Gastrocnemius medialis (tissue), 4 donors: ENCODE measurements at regions of chr1 and their contacts with region 1.

Region 1: GRCh38 chr1:226702957-226703831 is 35.9 kb downstream of the ITPKB start:
- DNase-seq: peak; percentile 57 to 65
- ATAC-seq: peak; percentile 61 to 63
- H3K4me3 ChIP-seq: peak overlapping the region; percentile 79 to 90 (median 84)
- H3K27ac ChIP-seq: peak overlapping the region; percentile 96 to 99 (median 98)
- H3K4me1 ChIP-seq: peaks cover 33 to 51% of the 10 kb centered on the region in 2 donors
- H3K27me3 ChIP-seq: no peaks in the 10 kb centered on the region
- CTCF ChIP-seq: peak in 2 of 5 experiments; percentile 21 to 32
- POLR2A ChIP-seq: peak; percentile 92 to 95

Region 2: DNA sequence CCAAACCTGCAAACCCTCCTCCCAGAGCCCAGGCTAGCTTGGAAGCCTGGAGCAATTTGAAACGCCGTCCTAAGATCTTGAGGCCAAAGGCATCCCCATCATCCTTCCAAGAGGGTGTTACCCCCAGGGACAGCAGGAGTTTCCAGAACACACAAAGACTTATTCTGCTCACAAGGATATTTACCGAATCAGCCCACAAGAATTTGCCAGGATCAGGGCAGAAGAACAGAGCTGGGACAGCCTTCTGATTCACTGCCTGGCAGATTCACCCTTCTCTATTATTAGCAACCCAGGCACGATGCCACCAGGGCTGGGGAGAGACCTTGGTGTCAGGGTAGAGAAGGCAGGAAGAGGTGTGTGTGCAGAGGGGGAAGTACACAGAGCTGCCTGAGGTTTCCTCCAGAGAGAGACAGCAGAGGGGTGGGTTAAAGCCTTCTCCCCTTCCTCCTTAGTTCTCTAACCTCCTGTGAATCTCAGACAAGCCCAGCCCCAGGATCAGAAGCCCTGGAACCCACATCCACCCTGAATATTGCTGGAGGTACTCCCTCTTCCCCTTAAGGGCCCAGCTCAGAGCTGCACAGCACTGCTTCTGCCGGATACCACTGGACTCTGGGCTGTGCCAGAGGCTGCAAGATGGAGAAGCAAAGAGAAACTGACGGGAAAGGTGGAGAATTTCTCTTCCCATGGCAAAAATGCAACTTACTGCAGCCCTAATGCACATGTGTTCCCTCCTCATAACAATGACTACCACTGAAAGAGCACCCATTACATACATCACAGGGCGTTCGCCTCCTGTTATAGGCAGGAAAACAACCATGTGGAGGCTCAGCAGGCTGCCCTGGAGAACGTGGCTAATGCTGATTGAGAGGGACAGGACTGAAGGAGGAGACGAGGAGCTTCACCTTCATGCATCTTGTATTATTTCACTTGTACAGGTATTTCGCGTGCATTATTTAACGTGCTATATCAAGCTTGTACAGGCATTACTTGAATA is 25.9 kb before region 1 on chr1:
- in situ Hi-C with region 1: no loop called
- intact Hi-C with region 1: loop called (anchors 2 kb)
- DNase-seq: peak; percentile 92 to 95
- ATAC-seq: peak; percentile 87 to 91
- H3K4me3 ChIP-seq: peak overlapping the region in 2 of 4 donors; percentile 2 to 10
- H3K27ac ChIP-seq: peak overlapping the region; percentile 89 to 96 (median 94)
- H3K4me1 ChIP-seq: peaks cover 66 to 88% of the 10 kb centered on the region in 2 donors
- H3K27me3 ChIP-seq: no peaks in the 10 kb centered on the region
- CTCF ChIP-seq: no peak
- POLR2A ChIP-seq: peak; percentile 48 to 56

Region 3: DNA sequence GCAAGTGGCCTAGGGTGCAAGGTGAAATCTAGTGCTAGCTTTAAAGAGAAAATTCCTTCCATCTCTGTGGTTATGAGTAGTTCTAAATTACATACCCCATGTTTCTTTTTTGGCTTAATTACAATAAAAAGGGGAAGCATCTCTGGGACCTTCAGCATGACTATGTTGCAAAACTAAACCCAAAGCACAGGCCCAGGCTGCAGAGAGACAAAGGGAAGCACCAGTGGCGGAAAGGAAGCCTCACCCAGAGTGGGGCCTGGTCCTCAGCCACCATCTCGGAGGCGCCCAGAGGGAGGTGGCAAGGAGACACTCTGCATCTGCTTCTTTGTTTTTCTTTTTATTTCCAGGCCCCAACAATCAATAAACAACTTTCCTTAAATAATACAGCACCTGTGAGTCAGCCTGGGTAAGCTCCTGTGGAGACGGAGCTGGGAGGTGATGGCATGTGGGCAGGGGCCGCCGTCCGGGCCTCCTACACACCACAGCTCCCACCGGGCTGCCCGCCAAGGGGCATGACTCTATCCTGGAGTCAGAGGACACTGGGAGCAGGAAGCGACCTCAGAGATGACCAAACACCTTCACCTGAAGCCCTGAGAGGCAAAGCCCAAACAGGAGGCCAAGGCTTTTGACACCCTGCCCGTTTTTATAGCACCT is 14.2 kb after region 1 on chr1:
- in situ Hi-C with region 1: no loop called
- intact Hi-C with region 1: no loop called
- DNase-seq: no peak
- ATAC-seq: peak in 1 of 2 donors; percentile 27
- H3K4me3 ChIP-seq: no peak overlapping the region
- H3K27ac ChIP-seq: peak overlapping the region; percentile 13 to 43 (median 36)
- H3K4me1 ChIP-seq: peaks cover 8 to 21% of the 10 kb centered on the region in 2 donors
- H3K27me3 ChIP-seq: no peaks in the 10 kb centered on the region
- CTCF ChIP-seq: no peak
- POLR2A ChIP-seq: no peak